ENCODE measurements at regions of chr22 and their contacts with region 1.

Region 1: DNA sequence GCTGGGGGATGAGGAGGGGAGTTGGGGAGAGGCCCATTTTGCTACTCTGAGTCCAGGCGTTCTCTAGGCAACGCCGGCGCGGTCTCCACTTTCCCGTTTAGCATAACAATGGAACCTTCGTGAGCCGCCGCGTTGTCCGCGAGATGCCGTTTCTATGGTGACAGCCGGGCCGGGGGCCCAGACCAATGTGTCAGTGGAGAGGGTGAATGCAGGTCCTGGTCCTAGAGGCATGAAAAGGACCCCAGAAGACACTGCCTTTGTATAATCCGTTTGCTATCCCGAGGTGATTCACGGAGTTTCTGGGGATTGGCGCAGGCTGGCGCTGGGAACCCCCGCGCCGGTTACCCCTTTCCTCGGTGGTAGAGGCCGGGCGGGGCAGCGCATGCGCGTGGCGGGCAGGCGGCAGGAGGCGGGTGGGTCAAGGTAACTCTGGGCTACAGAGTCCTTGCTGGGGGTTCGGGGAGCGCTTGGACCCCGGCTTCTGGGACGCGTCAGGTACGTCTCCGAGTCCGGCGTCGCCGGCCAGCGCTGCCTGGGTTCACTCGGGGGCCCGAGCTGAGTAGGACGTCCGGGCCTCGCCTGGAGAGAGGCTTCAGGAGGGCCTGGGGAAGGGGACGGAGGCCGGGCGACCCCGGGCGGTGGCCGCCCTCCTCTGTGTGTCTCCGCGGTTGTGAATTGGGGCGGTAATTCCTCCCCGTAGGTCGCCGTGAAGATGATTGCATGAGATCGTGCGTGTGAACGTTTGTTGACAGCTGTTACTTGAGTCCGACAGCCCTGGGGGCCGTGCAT is at the starts of genes CBY1 and FAM227A:
- DNase-seq: peak; percentile 17
- ATAC-seq: peak; percentile 95
- H3K4me3 ChIP-seq: peak within 1 kb of the TSS; percentile 76 to 77
- H3K27ac ChIP-seq: peak within 1 kb of the TSS; percentile 91
- H3K4me1 ChIP-seq: no peaks in the 10 kb centered on the region; the same call in 1 of the 2 replicates
- H3K27me3 ChIP-seq: no peaks in the 10 kb centered on the region
- CTCF ChIP-seq: no peak
- total RNA-seq, gene CBY1: 20.4 TPM
- total RNA-seq, gene FAM227A: 2.4 TPM

Region 2: GRCh38 chr22:38578505-38578904 is 77.9 kb before region 1 on chr22:
- CTCF ChIA-PET with region 1: no interaction called
- POLR2A ChIA-PET with region 1: interaction called, 11 read pairs
- in situ Hi-C with region 1: no loop called
- intact Hi-C with region 1: no loop called
- DNase-seq: no peak
- ATAC-seq: no peak
- H3K4me3 ChIP-seq: no peak overlapping the region
- H3K27ac ChIP-seq: no peak overlapping the region
- H3K4me1 ChIP-seq: no peaks in the 10 kb centered on the region
- H3K27me3 ChIP-seq: no peaks in the 10 kb centered on the region
- CTCF ChIP-seq: no peak

Region 3: GRCh38 chr22:38681784-38682335 is 25.4 kb after region 1 on chr22 and contains the start of gene TOMM22:
- CTCF ChIA-PET with region 1: interaction called, 10 read pairs
- POLR2A ChIA-PET with region 1: interaction called, 3 read pairs
- in situ Hi-C with region 1: no loop called
- intact Hi-C with region 1: no loop called
- DNase-seq: no peak
- ATAC-seq: peak; percentile 99
- H3K4me3 ChIP-seq: peak within 1 kb of the TSS; percentile 93 to 96
- H3K27ac ChIP-seq: peak within 1 kb of the TSS; percentile 91
- H3K4me1 ChIP-seq: no peaks in the 10 kb centered on the region
- H3K27me3 ChIP-seq: no peaks in the 10 kb centered on the region
- CTCF ChIP-seq: peak; percentile 92
- total RNA-seq, gene TOMM22: 111 TPM

Measured in Panc1 (cell line).